Activated T-helper 1 cell treated with anti-CD3 and anti-CD28 coated beads, Interleukin-12 subunit alpha, Interleukin-12 subunit beta, Interleukin-2, Interleukin-4 antibody, amounts not matched to agents 30 ng/mL and 10 ng/mL and 1 ng/mL, durations not matched to agents 14 hours and 24 hours and 36 hours (primary cell): ENCODE measurements at regions of chr4 and their contacts with region 1.

Region 1: GRCh38 chr4:110268352-110268751 is 69.9 kb upstream of the ELOVL6 start:
- DNase-seq: no peak
- H3K4me3 Mint-ChIP-seq: no peak overlapping the region
- H3K27ac Mint-ChIP-seq: peak overlapping the region; percentile 55
- H3K4me1 Mint-ChIP-seq: peaks cover 7% of the 10 kb centered on the region
- H3K27me3 Mint-ChIP-seq: peaks cover 29% of the 10 kb centered on the region

Region 2: GRCh38 chr4:110059556-110060191 is 208.7 kb before region 1 on chr4:
- intact Hi-C with region 1: no loop called
- DNase-seq: peak; percentile 9
- H3K4me3 Mint-ChIP-seq: peak overlapping the region; percentile 62
- H3K27ac Mint-ChIP-seq: peak overlapping the region; percentile 79
- H3K4me1 Mint-ChIP-seq: peaks cover 76% of the 10 kb centered on the region
- H3K27me3 Mint-ChIP-seq: no peaks in the 10 kb centered on the region

Region 3: DNA sequence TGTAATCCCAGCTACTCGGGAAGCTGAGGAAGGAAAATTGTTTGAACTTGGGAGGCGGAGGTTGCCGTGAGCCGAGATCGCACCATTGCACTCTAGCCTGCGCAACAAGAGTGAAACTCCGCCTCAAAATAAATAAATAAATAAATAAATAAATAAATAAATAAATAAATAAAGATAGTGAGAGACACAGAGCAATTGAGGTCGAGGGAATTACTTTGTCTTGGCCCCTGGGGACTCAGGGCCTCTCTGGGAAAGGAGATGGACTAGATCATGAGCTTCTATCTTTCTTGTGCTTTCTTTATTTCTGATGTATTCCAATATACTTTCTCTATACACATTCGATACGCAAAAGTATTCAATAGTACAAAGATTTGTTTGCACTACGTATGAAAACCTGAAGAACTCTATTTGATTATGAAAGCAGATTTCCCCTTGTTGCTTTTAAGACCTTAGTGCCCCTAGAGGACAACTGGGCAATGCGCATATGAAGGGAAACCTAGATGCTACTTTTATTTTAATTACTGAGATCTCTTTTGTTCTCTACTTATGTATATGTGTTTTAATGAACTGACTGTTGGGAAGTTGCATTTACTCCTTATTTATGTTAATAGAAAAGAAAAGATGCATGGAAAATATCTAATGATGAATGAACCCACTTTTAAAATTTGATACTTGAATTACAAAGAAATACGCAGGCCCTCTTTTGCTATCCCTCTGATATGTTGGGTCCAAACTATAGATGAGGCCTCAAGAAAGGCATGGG is 57.2 kb before region 1 on chr4:
- intact Hi-C with region 1: loop called (anchors 2 kb)
- DNase-seq: no peak
- H3K4me3 Mint-ChIP-seq: no peak overlapping the region
- H3K27ac Mint-ChIP-seq: no peak overlapping the region
- H3K4me1 Mint-ChIP-seq: peaks cover 11% of the 10 kb centered on the region
- H3K27me3 Mint-ChIP-seq: peaks cover 4% of the 10 kb centered on the region

Region 4: DNA sequence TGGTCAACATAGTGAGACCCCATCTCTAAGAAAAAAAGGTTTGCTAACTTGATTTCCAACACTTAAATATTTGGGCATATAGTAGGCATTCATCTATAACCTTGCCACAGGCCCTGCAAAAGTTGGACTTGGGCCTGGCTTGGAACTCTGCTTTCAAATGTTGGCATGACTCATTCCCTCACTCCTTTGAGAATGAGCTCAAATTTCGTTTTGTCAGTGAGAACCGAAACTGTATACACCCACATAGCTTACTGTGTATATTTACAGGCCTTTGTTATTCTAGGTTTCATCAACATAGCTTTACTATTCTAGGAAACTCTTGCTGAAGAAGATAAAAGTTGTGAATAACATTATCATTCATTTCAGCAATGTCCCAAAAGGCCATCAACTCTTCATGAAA is 18.8 kb after region 1 on chr4:
- intact Hi-C with region 1: loop called (anchors 1 kb)
- DNase-seq: no peak
- H3K4me3 Mint-ChIP-seq: peak overlapping the region; percentile 31
- H3K27ac Mint-ChIP-seq: peak overlapping the region; percentile 74
- H3K4me1 Mint-ChIP-seq: peaks cover 15% of the 10 kb centered on the region
- H3K27me3 Mint-ChIP-seq: peaks cover 13% of the 10 kb centered on the region

Region 5: DNA sequence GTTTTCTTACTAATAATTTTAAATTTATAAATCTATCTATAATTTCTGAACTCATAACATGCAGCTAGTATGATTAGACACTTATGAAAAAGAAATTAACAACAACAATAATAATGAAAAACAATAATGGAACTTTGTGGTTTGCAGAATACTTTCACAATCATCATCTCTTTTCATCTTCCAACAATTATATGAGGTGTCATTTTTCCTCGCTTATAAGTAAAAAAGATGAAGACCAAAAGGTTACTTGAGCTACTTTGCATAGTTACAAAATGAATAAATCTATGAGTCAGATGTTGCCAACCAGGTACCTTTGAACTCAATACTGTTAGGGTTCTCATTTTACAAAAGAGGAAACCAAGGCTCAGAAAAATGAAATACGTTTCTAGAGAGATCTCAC is 28.5 kb after region 1 on chr4:
- intact Hi-C with region 1: loop called (anchors 2 kb)
- DNase-seq: no peak
- H3K4me3 Mint-ChIP-seq: no peak overlapping the region
- H3K27ac Mint-ChIP-seq: peak overlapping the region; percentile 20
- H3K4me1 Mint-ChIP-seq: peaks cover 15% of the 10 kb centered on the region
- H3K27me3 Mint-ChIP-seq: peaks cover 17% of the 10 kb centered on the region

Region 6: DNA sequence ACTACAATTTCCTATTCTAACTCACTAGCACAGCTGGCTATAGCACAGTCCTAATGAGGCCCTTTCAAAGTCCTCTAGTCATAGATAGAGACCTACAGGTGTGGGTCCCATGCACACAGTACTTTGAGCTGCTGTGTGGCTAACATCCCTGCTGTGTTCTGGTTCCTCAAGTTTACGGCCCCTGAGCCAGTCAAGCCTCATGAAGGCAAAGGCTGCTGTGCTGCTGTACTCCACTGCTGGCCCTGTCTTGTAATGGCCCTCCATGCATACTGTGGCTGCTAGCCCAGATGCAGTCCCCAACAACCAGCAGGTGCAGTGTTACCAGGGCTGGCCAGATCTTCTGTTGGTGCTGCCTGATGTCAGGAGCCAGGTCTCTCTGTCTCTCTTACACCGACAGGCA is 184.2 kb after region 1 on chr4:
- intact Hi-C with region 1: no loop called
- DNase-seq: no peak
- H3K4me3 Mint-ChIP-seq: no peak overlapping the region
- H3K27ac Mint-ChIP-seq: no peak overlapping the region
- H3K4me1 Mint-ChIP-seq: no peaks in the 10 kb centered on the region
- H3K27me3 Mint-ChIP-seq: peaks cover 10% of the 10 kb centered on the region

Region 7: DNA sequence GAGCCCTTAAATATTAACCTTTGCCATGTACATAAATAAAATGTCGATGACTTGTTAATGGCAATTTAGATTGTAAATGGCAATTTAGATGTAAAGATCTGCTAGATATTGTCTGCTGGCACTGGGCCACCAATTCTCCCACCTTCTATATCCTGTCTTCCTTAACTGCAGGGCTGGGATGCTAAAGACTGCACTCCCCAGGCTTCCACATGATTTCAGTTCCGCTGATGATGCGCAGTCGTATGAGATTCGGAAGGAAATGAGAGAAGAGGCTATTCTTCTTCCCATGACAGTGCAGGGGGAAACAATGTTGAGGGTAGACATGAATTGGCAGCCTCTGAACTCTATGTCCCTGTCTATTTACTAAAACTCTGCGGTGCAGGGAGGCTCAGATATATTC is 298.9 kb after region 1 on chr4:
- intact Hi-C with region 1: no loop called
- DNase-seq: no peak
- H3K4me3 Mint-ChIP-seq: no peak overlapping the region
- H3K27ac Mint-ChIP-seq: no peak overlapping the region
- H3K4me1 Mint-ChIP-seq: no peaks in the 10 kb centered on the region
- H3K27me3 Mint-ChIP-seq: peaks cover 2% of the 10 kb centered on the region